Activated B cell treated with CpG ODN at 0.5 μM for 24 hours (primary cell): ENCODE measurements at regions of chr17 and their contacts with region 1.

Region 1: GRCh38 chr17:21098934-21099689 is 27.7 kb upstream of the DHRS7B start:
- DNase-seq: peak; percentile 45
- ATAC-seq: peak; percentile 96
- H3K4me3 Mint-ChIP-seq: peak overlapping the region; percentile 90
- H3K27ac Mint-ChIP-seq: no peak overlapping the region
- H3K4me1 Mint-ChIP-seq: peaks cover 17% of the 10 kb centered on the region
- H3K27me3 Mint-ChIP-seq: no peaks in the 10 kb centered on the region
- CTCF ChIP-seq: no peak

Region 2: GRCh38 chr17:20908373-20909273 is 190.5 kb before region 1 on chr17:
- CTCF ChIA-PET with region 1: no interaction called
- POLR2A ChIA-PET with region 1: no interaction called
- intact Hi-C with region 1: loop called (anchors 1 kb)
- DNase-seq: peak; percentile 74
- ATAC-seq: peak; percentile 99
- H3K4me3 Mint-ChIP-seq: peak overlapping the region; percentile 82
- H3K27ac Mint-ChIP-seq: no peak overlapping the region
- H3K4me1 Mint-ChIP-seq: peaks cover 7% of the 10 kb centered on the region
- H3K27me3 Mint-ChIP-seq: no peaks in the 10 kb centered on the region
- CTCF ChIP-seq: no peak

Region 3: GRCh38 chr17:21019976-21020586 is 79.0 kb before region 1 on chr17:
- CTCF ChIA-PET with region 1: interaction called, 14 read pairs
- POLR2A ChIA-PET with region 1: interaction called, 3 read pairs
- intact Hi-C with region 1: loop called (anchors 1 kb)
- DNase-seq: no peak
- ATAC-seq: peak; percentile 79
- H3K4me3 Mint-ChIP-seq: peak overlapping the region; percentile 17
- H3K27ac Mint-ChIP-seq: peak overlapping the region; percentile 81
- H3K4me1 Mint-ChIP-seq: peaks cover 42% of the 10 kb centered on the region
- H3K27me3 Mint-ChIP-seq: no peaks in the 10 kb centered on the region
- CTCF ChIP-seq: no peak

Region 4: DNA sequence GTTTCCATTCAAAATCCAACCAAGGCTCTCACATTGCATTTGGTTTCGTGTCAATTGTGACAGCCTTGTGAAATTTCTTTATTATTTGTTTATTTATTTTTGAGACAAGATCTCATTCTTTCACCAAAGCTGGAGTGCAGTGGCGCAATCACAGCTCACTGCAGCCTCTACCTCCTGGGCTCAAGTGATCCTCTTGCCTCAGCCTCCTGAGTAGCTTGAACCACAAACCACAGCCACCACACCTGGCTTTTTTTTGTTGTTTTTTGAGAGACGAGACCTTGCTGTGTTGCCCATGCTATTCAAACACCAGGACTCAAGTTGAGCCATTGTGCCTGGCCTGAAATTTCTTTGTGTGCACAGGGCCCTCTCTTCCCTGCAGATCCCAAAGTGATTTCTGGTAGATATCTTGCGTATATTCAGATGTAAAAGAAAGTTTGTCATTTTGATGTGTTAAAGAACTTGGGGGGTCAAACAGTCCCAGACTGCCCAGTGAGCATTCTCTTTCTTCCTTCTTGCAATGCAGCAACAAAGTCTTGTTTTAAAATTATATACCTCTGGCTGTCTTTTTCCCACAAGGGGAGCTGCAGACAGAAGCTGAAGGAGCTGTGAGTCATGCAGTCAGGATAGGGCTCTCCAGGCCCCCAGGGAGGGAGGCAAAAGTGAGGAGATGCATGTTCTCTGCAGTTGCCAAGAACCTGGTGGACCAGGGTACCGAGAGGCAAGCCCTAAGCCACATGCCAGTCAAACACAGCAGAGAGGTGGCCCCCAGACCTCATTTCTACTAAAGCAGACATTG is 40.8 kb before region 1 on chr17:
- CTCF ChIA-PET with region 1: interaction called, 3 read pairs
- POLR2A ChIA-PET with region 1: no interaction called
- intact Hi-C with region 1: loop called (anchors 1 kb)
- DNase-seq: no peak
- ATAC-seq: no peak
- H3K4me3 Mint-ChIP-seq: no peak overlapping the region
- H3K27ac Mint-ChIP-seq: no peak overlapping the region
- H3K4me1 Mint-ChIP-seq: peaks cover 19% of the 10 kb centered on the region
- H3K27me3 Mint-ChIP-seq: no peaks in the 10 kb centered on the region
- CTCF ChIP-seq: no peak

Region 5: DNA sequence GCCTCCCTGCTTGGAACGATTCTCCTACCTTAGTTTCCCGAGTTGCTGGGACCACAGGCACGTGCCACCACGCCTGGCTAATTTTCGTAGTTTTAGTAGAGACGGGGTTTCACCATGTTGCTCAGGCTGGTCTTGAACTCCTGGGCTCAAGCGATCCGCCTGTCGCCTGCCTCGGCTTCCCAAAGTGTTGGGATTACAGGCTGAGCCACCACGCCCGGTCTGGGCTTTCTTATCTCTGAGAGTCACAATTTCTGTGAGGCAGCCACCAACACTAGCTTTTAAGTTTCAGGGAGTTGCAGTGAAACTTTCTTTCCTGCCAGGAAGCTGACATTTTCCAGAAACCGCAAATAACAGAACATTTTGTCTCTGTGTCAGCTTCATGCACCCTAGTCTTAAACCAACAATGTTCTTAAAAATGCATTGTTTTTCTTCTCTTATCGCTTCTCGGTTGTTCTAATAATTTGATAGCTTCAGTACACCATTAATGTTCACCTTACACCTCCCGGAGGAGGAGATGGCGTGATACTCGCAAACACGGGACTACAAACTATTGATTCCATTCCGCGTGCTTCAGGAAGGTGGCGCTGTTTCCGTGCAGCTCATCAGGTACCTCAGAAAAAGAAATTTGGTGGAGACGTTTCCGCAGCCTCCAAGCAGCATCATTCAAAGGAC is 20.3 kb after region 1 on chr17:
- CTCF ChIA-PET with region 1: interaction called, 11 read pairs
- POLR2A ChIA-PET with region 1: interaction called, 4 read pairs
- intact Hi-C with region 1: no loop called
- DNase-seq: peak; percentile 41
- ATAC-seq: peak; percentile 93
- H3K4me3 Mint-ChIP-seq: no peak overlapping the region
- H3K27ac Mint-ChIP-seq: no peak overlapping the region
- H3K4me1 Mint-ChIP-seq: peaks cover 6% of the 10 kb centered on the region
- H3K27me3 Mint-ChIP-seq: peaks cover 9% of the 10 kb centered on the region
- CTCF ChIP-seq: no peak

Region 6: GRCh38 chr17:21126645-21127510 is 27.8 kb after region 1 on chr17 and contains the start of gene DHRS7B:
- CTCF ChIA-PET with region 1: interaction called, 4 read pairs
- POLR2A ChIA-PET with region 1: interaction called, 3 read pairs
- intact Hi-C with region 1: loop called (anchors 1 kb)
- DNase-seq: peak; percentile 95
- ATAC-seq: peak; percentile 90
- H3K4me3 Mint-ChIP-seq: peak within 1 kb of the TSS; percentile 94
- H3K27ac Mint-ChIP-seq: peak within 1 kb of the TSS; percentile 91
- H3K4me1 Mint-ChIP-seq: peaks cover 35% of the 10 kb centered on the region
- H3K27me3 Mint-ChIP-seq: peaks cover 3% of the 10 kb centered on the region
- CTCF ChIP-seq: no peak
- total RNA-seq, gene DHRS7B: 11.8 and 12.1 TPM in 2 replicates

Region 7: GRCh38 chr17:21275047-21275578 is 176.0 kb after region 1 on chr17:
- CTCF ChIA-PET with region 1: no interaction called
- POLR2A ChIA-PET with region 1: no interaction called
- intact Hi-C with region 1: no loop called
- DNase-seq: no peak
- ATAC-seq: no peak
- H3K4me3 Mint-ChIP-seq: peak overlapping the region; percentile 88
- H3K27ac Mint-ChIP-seq: no peak overlapping the region
- H3K4me1 Mint-ChIP-seq: peaks cover 29% of the 10 kb centered on the region
- H3K27me3 Mint-ChIP-seq: no peaks in the 10 kb centered on the region
- CTCF ChIP-seq: no peak